Activated T-helper 2 cell treated with anti-CD3 and anti-CD28 coated beads, Interferon-gamma antibody, Interleukin-2, Interleukin-4, amounts not matched to agents 10 μg/mL and 5 μg/mL and 100 μg/mL, durations not matched to agents 14 hours and 24 hours and 36 hours (primary cell): ENCODE measurements at regions of chr3 and their contacts with region 1.

Region 1: GRCh38 chr3:171566803-171567422 is 106.7 kb upstream of the TNIK start:
- DNase-seq: no peak
- H3K4me3 Mint-ChIP-seq: no peak overlapping the region
- H3K27ac Mint-ChIP-seq: no peak overlapping the region
- H3K4me1 Mint-ChIP-seq: peaks cover 24% of the 10 kb centered on the region
- H3K27me3 Mint-ChIP-seq: peaks cover 24% of the 10 kb centered on the region

Region 2: DNA sequence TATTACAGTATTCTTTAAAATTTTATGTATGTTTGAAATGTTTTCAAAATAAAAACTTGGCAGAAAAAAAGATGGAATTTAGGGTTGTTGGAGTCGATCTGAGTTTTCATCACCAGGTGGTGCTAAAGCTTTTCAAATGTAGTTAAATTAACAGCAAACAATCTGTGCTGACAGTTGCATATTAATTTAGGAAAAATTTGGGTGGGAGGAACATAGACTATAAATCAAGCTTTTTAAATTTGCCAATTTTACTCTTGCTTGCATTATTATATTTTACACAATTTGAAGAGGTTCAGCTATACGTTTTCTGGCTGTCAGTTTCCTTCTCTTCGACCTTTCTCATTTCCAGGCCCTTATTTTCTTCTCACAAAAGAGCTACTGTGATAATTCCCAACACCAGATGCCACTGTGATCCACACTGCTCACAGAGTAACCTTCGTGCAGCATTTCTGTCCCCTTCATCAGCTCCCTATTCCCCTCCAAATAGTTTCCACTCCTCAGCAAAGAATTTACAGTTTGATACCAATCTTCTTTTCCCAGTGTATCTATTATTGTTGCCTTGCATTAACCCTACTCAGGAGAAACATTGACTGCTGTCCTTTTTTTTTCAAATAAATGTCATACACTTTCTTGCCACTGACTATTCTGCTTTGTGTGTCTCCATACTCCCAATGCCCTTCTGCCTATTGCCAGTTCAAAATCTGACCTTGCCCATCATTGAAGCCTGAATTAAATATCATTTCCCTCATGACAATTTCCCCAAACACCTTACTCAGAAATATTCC is 605.1 kb before region 1 on chr3:
- intact Hi-C with region 1: loop called (anchors 5 kb)
- DNase-seq: no peak
- H3K4me3 Mint-ChIP-seq: no peak overlapping the region
- H3K27ac Mint-ChIP-seq: no peak overlapping the region
- H3K4me1 Mint-ChIP-seq: no peaks in the 10 kb centered on the region
- H3K27me3 Mint-ChIP-seq: peaks cover 24% of the 10 kb centered on the region

Region 3: GRCh38 chr3:171049861-171050444 is 517.0 kb before region 1 on chr3:
- intact Hi-C with region 1: loop called (anchors 2 kb)
- DNase-seq: peak; percentile 22
- H3K4me3 Mint-ChIP-seq: no peak overlapping the region
- H3K27ac Mint-ChIP-seq: no peak overlapping the region
- H3K4me1 Mint-ChIP-seq: no peaks in the 10 kb centered on the region
- H3K27me3 Mint-ChIP-seq: peaks cover 7% of the 10 kb centered on the region

Region 4: GRCh38 chr3:171162986-171163723 is 403.8 kb before region 1 on chr3:
- intact Hi-C with region 1: loop called (anchors 1 kb)
- DNase-seq: no peak
- H3K4me3 Mint-ChIP-seq: no peak overlapping the region
- H3K27ac Mint-ChIP-seq: no peak overlapping the region
- H3K4me1 Mint-ChIP-seq: peaks cover 18% of the 10 kb centered on the region
- H3K27me3 Mint-ChIP-seq: no peaks in the 10 kb centered on the region